Activated T-helper 1 cell treated with anti-CD3 and anti-CD28 coated beads, Interleukin-12 subunit alpha, Interleukin-12 subunit beta, Interleukin-2, Interleukin-4 antibody, amounts not matched to agents 30 ng/mL and 10 ng/mL and 1 ng/mL, durations not matched to agents 14 hours and 24 hours and 36 hours (primary cell): ENCODE measurements at regions of chr18 and their contacts with region 1.

Region 1: GRCh38 chr18:911025-911424 is 6.4 kb downstream of the ADCYAP1 start:
- DNase-seq: no peak
- H3K4me3 Mint-ChIP-seq: no peak overlapping the region
- H3K27ac Mint-ChIP-seq: no peak overlapping the region
- H3K4me1 Mint-ChIP-seq: peaks cover 7% of the 10 kb centered on the region
- H3K27me3 Mint-ChIP-seq: peaks cover 48% of the 10 kb centered on the region

Region 2: DNA sequence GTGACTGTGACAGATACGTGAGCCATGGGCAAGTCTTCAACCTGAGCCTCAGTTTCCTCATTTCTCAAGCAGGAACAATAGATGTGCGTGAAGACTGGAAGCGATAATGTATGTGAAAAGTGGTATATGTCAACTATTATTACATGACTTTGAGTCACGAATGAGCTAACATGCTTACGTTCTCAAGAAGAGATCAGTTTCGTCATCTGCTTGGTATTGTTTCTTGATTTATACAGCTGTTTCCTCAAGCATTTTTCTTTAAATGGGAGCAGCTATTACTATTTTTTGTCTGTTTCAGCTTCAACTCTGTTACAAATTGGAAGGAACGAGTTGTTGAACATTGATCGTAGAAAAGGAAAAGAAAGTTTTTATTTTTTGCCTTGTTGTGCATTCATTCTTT is 594.6 kb before region 1 on chr18:
- intact Hi-C with region 1: no loop called
- DNase-seq: no peak
- H3K4me3 Mint-ChIP-seq: no peak overlapping the region
- H3K27ac Mint-ChIP-seq: no peak overlapping the region
- H3K4me1 Mint-ChIP-seq: no peaks in the 10 kb centered on the region
- H3K27me3 Mint-ChIP-seq: no peaks in the 10 kb centered on the region

Region 3: DNA sequence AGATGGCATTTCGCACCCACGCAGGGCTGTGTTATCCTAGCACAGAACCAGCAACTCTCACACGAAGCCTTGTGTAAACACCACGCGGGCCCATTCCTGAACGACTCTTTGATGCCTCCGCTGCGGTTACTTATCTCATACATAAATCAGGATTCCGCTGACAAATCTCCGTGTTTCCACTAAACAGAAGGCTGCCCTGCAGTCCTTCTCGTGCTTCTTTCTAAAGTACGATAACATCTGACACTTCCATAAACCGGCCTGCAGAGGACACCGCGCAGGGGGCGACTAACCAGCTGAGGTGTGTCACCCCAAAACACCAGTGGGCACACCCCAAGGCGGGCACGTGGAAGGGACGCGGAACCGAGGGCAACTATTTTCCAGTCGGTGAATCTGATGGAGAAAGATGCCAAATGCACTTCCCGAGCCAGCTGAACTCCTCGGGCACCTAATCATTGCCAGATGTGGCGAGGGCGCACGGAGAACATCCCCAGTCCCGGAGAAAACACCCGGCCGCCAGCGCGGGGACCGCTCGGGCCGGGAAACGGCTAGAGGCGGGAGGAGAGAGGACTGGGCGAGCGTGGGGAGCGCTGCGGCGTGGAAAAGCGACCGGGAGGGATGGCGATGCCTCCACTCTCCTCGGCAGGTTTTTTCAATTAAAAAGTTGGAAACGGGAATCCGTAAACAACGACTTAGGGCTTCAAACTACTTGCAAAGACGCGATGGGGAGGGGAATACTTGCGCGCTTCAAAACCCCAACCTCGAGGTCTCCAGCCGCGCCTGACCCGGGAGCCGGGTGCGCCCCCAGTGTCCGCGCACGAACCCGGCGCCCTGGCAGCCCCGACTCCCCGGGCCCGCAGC is 411.2 kb before region 1 on chr18:
- intact Hi-C with region 1: loop called (anchors 5 kb)
- DNase-seq: no peak
- H3K4me3 Mint-ChIP-seq: no peak overlapping the region
- H3K27ac Mint-ChIP-seq: no peak overlapping the region
- H3K4me1 Mint-ChIP-seq: no peaks in the 10 kb centered on the region
- H3K27me3 Mint-ChIP-seq: peaks cover 29% of the 10 kb centered on the region

Region 4: GRCh38 chr18:607930-608329 is 303.1 kb before region 1 on chr18:
- intact Hi-C with region 1: no loop called
- DNase-seq: no peak
- H3K4me3 Mint-ChIP-seq: no peak overlapping the region
- H3K27ac Mint-ChIP-seq: no peak overlapping the region
- H3K4me1 Mint-ChIP-seq: no peaks in the 10 kb centered on the region
- H3K27me3 Mint-ChIP-seq: peaks cover 7% of the 10 kb centered on the region

Region 5: DNA sequence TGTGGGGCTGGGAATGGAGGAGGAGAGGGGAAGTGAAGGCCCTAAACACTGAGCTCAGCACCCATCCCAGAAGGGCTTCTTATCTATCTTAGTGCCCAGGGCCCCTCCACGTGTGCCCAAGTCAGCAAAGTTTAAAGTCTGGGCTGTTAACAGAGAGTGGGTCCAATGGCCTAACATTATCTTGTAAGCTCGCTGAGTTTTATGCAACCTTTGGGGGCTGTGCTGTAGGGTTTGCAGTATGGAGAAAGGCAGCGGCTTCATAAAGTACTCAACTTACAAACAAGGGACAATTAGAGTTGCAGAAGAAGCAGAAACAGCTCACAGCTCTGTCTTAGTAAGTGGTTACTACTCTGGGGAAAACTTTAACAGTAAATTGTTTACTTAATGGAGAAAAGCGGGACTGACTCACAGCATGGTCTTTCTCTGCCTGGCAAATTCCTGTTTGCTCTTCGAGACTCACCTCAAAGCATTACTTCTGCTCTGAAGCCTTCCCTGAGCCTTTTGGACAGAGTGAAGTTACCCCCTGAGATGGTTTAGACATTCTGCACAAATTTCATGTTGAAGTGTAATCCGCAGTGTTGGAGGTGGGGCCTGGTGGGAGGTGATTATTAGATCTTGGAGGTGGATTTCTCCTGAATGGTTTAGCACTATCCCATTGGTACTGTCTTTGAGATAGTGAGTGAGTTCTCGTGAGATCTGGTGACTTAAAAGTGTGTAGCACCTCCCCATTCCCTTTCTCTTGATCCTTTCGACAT is 207.6 kb before region 1 on chr18:
- intact Hi-C with region 1: no loop called
- DNase-seq: no peak
- H3K4me3 Mint-ChIP-seq: no peak overlapping the region
- H3K27ac Mint-ChIP-seq: peak overlapping the region; percentile 79
- H3K4me1 Mint-ChIP-seq: peaks cover 21% of the 10 kb centered on the region
- H3K27me3 Mint-ChIP-seq: no peaks in the 10 kb centered on the region

Region 6: DNA sequence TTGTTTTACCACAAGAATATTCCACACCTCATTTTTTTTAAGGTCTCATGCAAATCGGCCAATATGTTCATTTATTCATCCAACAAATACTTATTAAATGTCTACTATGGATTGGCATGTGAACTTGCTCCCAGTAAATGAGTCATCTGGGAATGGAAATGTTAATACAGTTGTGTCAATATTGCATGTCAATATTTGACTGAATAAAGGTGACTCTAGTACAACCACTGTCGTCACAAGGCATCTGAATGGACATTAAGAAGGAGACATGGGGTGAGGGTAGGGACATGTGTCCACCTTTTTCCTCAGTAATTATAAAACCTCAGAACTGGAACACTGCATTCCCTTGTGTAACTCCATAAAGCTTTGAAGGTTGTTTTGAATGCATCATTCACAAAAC is 359.1 kb after region 1 on chr18:
- intact Hi-C with region 1: no loop called
- DNase-seq: no peak
- H3K4me3 Mint-ChIP-seq: no peak overlapping the region
- H3K27ac Mint-ChIP-seq: no peak overlapping the region
- H3K4me1 Mint-ChIP-seq: no peaks in the 10 kb centered on the region
- H3K27me3 Mint-ChIP-seq: no peaks in the 10 kb centered on the region